ENCODE measurements at regions of chr9 and their contacts with region 1.

Region 1: DNA sequence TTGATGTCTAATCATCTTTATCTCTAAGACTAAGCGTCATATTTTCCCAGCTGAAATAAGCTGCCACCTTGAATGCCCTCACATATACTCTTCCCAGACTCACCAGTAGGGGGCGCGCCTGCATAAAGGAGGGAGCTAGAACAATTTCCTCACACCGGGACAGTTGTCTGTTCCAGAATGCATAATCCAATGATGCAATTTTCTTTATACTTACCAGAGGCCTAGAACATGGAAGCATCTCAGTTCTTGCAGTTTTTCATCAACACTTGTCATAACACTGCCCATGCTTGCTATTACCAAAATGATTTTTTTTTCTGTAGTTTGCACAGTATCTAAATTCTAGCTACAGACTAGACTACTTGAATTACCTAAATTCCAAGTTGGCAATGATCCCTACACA is 203.9 kb downstream of the FRMD3 start:
- DNase-seq: peak; percentile 64
- ATAC-seq: peak; percentile 92
- H3K4me3 ChIP-seq: no peak overlapping the region
- H3K27ac ChIP-seq: no peak overlapping the region
- H3K4me1 ChIP-seq: no peaks in the 10 kb centered on the region
- H3K27me3 ChIP-seq: no peaks in the 10 kb centered on the region
- CTCF ChIP-seq: peak; percentile 91
- EP300 ChIP-seq: 0 out of 4 replicates have a peak, but pooled peaks of 1 of the 2 experiments have one; percentile 4
- POLR2A ChIP-seq: no peak
- RAD21 ChIP-seq: peak; percentile 93

Region 2: DNA sequence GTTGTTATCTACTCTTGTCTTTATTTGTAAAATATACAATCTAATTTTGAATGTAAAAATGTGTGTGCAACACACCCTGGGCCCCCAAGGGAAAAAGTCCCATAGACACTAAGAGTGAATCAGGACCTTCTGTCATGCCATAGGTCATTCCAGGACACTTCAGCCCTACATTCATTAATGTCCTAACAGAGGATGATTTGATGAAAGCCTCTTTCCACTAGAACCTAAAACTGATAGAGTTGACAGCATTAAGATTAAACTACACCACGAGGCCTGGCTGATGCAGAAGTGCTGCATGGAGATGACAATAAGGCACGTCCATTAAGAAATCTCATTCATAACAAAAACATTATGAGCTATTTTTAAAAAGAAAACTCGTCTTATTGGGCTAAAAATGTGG is 157.7 kb after region 1 on chr9:
- CTCF ChIA-PET with region 1: no interaction called
- POLR2A ChIA-PET with region 1: no interaction called
- in situ Hi-C with region 1: no loop called
- intact Hi-C with region 1: no loop called
- DNase-seq: no peak
- ATAC-seq: no peak
- H3K4me3 ChIP-seq: no peak overlapping the region
- H3K27ac ChIP-seq: no peak overlapping the region
- H3K4me1 ChIP-seq: no peaks in the 10 kb centered on the region
- H3K27me3 ChIP-seq: no peaks in the 10 kb centered on the region
- CTCF ChIP-seq: no peak
- EP300 ChIP-seq: no peak
- POLR2A ChIP-seq: no peak
- RAD21 ChIP-seq: no peak

Region 3: DNA sequence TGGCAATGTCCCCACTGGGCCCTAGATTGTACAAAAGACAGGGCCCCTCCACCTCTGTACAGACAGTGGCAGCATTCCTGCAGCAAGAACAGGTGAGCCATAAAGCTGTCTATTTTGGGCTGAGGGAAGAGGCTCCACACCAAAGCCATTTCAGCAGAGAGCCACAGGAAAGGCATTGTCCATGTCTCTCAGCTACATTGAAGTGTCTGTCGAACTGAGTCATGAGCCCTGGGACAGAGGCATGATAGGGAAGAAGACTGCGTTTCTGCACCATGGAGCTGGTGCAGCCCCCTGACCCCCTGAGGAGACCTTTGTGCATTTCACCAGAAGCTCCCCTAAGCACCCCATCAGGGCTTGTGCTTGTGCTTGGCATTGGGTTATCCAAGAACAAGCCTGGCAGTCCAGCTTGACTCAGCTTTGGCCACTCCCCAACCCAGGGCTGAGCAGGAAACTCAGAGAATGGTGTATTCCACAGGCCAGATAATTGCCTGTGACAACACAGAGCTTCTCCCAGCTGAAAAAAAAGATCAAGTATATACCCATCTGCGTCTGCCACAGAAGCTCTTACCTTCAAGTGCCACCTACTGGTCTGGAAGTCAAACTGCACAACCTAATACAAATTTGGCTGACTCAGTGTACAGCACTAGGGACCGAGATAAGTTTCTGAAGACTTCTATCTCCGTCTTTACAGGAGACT is 209.8 kb after region 1 on chr9:
- CTCF ChIA-PET with region 1: interaction called, 52 read pairs
- POLR2A ChIA-PET with region 1: interaction called, 4 read pairs
- in situ Hi-C with region 1: loop called (anchors 5 kb)
- intact Hi-C with region 1: loop called (anchors 1 kb)
- DNase-seq: peak; percentile 75
- ATAC-seq: peak; percentile 97
- H3K4me3 ChIP-seq: no peak overlapping the region
- H3K27ac ChIP-seq: no peak overlapping the region
- H3K4me1 ChIP-seq: peaks cover 20% of the 10 kb centered on the region
- H3K27me3 ChIP-seq: no peaks in the 10 kb centered on the region
- CTCF ChIP-seq: peak; percentile 92
- EP300 ChIP-seq: no peak
- POLR2A ChIP-seq: no peak
- RAD21 ChIP-seq: peak; percentile 85

Region 4: DNA sequence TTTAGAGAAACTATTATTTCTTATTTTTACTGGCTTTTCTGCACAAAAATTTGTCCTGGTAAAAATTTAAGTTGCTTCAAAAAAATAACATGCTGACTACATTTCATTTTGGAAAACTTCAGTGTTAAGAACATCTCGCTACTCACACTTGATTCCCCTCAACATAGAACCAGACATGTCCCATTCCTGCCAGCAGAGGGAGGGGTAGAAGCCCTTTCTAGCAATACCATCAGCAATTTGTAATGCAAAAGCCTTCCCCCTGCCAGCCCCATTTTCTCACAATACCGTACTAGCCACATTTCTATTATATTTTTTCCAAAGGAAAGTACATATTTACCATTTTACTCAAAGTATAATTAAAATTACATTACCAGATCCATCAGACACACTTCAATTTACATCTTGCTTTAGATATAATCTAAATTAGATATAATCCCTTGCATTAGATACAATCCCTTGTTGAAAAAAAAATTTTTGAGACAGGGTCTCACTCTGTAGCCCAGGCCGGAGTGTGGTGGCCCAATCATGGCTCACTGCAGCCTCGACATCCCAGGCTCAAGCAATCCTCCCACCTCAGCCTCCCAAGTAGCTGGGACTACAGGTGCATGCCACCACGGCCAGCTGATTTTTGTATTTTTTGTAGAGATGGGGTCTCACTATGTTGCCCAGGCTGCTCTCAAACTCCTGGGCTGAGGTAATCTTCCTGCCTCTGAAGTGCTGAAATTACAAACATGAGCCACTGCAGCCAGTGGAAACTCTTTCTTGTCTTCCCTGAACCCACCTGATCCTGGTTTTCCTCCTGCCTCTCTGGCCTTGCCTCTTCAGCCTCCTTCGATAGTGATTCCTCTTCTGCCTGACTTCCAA is 249.1 kb after region 1 on chr9:
- CTCF ChIA-PET with region 1: interaction called, 3 read pairs
- POLR2A ChIA-PET with region 1: no interaction called
- in situ Hi-C with region 1: no loop called
- intact Hi-C with region 1: loop called (anchors 1 kb)
- DNase-seq: peak; percentile 47
- ATAC-seq: peak; percentile 90
- H3K4me3 ChIP-seq: no peak overlapping the region
- H3K27ac ChIP-seq: no peak overlapping the region
- H3K4me1 ChIP-seq: no peaks in the 10 kb centered on the region
- H3K27me3 ChIP-seq: no peaks in the 10 kb centered on the region
- CTCF ChIP-seq: peak; percentile 74
- EP300 ChIP-seq: no peak
- POLR2A ChIP-seq: no peak
- RAD21 ChIP-seq: no peak